Thyroid gland (tissue), 4 donors: ENCODE measurements at regions of chr11 and their contacts with region 1.

Region 1: GRCh38 chr11:123407130-123407995 is 22.7 kb upstream of the GRAMD1B start:
- DNase-seq: peak; percentile 81 to 82
- H3K4me3 ChIP-seq: no peak overlapping the region
- H3K27ac ChIP-seq: peak overlapping the region; percentile 22 to 66 (median 56)
- H3K4me1 ChIP-seq: peaks cover 22 to 25% of the 10 kb centered on the region in 2 donors
- H3K27me3 ChIP-seq: no peaks in the 10 kb centered on the region
- CTCF ChIP-seq: peak; percentile 27 to 77 (median 70)
- POLR2A ChIP-seq: no peak

Region 2: DNA sequence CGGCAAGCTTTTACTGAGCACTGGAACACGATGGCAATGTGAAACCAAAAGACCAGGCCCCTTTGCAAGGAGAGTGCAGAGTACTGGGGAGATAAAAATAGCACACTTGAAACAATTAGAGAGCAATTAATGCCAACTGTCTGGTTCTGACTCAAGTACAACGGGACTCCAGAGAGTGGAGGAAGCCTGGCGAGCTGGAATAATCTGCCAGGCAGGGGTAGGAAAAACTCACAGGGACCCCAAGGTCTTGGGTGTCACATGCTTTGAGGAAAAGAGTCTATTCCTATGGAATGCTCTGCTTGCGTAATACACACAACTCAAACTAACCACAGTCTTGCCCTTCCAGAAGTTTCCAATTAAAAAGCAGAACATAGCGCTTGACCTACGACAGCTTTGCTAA is 99.3 kb before region 1 on chr11:
- intact Hi-C with region 1: loop called (anchors 5 kb)
- DNase-seq: peak; percentile 46 to 50
- H3K4me3 ChIP-seq: no peak overlapping the region
- H3K27ac ChIP-seq: peak overlapping the region; percentile 41 to 76 (median 72)
- H3K4me1 ChIP-seq: peaks cover 22 to 28% of the 10 kb centered on the region in 2 donors
- H3K27me3 ChIP-seq: no peaks in the 10 kb centered on the region
- CTCF ChIP-seq: no peak
- POLR2A ChIP-seq: no peak

Region 3: DNA sequence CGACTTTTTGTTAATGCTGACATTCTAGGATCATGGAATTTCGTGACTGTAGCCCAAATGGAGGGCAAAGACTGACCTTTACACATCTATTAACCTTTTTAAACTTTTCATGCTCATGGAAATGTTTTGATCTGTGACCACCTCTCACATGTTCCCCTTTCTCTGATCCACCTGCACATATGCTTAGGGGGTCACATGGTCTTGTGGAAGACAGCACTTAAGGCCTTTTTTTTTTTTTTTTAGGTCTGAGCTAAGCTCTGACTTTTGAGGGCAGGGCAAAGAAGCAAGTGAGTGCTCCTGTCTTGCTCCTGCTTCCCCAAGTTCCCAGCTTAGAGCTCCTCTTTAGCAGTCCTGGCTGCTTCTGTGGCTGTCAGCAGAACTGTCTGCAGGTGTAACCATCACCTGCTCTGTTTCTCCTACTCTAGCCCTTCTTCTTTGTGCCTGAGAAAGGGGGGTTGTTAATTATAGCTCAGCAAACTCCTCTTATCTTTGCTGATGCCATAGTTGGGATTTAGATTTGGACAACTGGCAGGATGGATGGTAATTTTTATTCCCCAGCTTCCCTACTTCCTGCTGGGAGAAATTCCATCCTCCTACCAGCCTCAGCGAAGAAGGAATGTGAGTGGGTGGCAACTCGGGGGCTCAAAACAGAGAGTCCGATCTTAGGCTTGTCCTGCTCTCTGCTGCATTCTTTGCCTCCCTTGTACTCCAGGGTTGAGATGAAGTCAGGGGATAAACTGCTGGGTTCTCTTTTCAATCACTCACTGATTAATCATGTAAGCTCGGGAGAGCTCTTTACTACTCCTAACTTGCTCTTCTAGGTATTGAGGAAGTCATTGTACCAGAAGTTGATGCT is 87.1 kb after region 1 on chr11:
- intact Hi-C with region 1: no loop called
- DNase-seq: no peak
- H3K4me3 ChIP-seq: no peak overlapping the region
- H3K27ac ChIP-seq: no peak overlapping the region
- H3K4me1 ChIP-seq: peaks cover 0 to 20% of the 10 kb centered on the region in 2 donors
- H3K27me3 ChIP-seq: no peaks in the 10 kb centered on the region
- CTCF ChIP-seq: no peak
- POLR2A ChIP-seq: no peak